Motor neuron (in vitro differentiated cells): ENCODE measurements at regions of chr18 and their contacts with region 1.

Region 1: GRCh38 chr18:58043491-58044379 is at the start of gene NEDD4L:
- ATAC-seq: peak; percentile 59 to 82 (median 80)
- H3K4me3 ChIP-seq: peak within 1 kb of the TSS; percentile 50 to 87 (median 67)
- H3K27ac ChIP-seq: peak within 1 kb of the TSS; percentile 64 to 80
- H3K4me1 ChIP-seq: peaks cover 12 to 15% of the 10 kb centered on the region in 2 donors
- total RNA-seq, gene NEDD4L: 51.2 to 394 (median 65.0) TPM

Region 2: GRCh38 chr18:58097121-58097906 is 53.6 kb after region 1 on chr18:
- in situ Hi-C with region 1: no loop called
- ATAC-seq: no peak
- H3K4me3 ChIP-seq: no peak overlapping the region
- H3K27ac ChIP-seq: no peak overlapping the region
- H3K4me1 ChIP-seq: peaks cover 6 to 8% of the 10 kb centered on the region in 2 donors

Region 3: GRCh38 chr18:58359218-58359617 is 315.5 kb after region 1 on chr18:
- in situ Hi-C with region 1: no loop called
- ATAC-seq: peak in 2 of 8 experiments; percentile 25 to 56
- H3K4me3 ChIP-seq: no peak overlapping the region
- H3K27ac ChIP-seq: no peak overlapping the region
- H3K4me1 ChIP-seq: no peaks in the 10 kb centered on the region

Region 4: DNA sequence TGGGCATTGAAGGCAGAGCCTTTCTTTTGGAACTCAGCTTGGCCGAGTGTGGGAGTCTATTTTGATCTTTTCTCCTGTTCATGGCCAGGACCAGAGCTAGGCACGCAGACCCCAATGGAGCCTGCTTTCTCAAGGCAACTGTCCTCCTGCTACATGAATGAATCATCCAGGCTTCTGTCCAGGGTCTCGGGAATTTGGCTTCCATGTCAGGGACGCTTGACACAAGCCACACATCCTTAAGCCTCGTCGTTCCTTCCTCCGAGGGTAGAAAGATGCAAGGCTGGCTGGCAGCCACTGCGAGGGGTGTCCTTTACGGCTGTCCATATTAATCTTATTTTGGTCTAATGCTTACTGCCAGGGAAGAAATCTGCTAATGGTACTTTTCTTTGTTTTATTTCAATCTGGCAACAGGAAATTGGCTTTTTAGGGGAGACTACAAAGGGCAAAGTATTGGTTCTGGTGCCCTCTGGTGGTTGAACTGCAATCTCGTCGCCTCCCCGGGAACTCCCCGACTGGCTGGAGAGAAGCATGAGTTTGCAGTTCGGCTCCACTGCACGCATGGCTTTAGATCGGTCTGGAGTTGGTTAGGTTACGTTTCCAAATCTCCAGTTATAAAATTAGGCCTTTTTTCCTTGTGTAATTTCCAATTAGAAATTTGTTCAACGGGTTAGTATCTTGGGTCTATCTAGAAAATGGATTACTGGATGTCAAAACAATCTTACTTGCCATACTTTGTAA is 449.9 kb after region 1 on chr18:
- in situ Hi-C with region 1: loop called in 4 of 9 experiments (anchors 25 kb)
- ATAC-seq: peak; percentile 87 to 98 (median 96)
- H3K4me3 ChIP-seq: no peak overlapping the region
- H3K27ac ChIP-seq: no peak overlapping the region
- H3K4me1 ChIP-seq: peaks cover 0 to 10% of the 10 kb centered on the region in 2 donors